Vagina (tissue), 2 donors: ENCODE measurements at regions of chr16 and their contacts with region 1.

Region 1: GRCh38 chr16:81752225-81752875 is 26.7 kb upstream of the PLCG2 start:
- DNase-seq: no peak
- H3K4me3 ChIP-seq: no peak overlapping the region
- H3K27ac ChIP-seq: no peak overlapping the region
- H3K4me1 ChIP-seq: no peaks in the 10 kb centered on the region
- H3K27me3 ChIP-seq: no peaks in the 10 kb centered on the region
- CTCF ChIP-seq: no peak
- POLR2A ChIP-seq: no peak

Region 2: DNA sequence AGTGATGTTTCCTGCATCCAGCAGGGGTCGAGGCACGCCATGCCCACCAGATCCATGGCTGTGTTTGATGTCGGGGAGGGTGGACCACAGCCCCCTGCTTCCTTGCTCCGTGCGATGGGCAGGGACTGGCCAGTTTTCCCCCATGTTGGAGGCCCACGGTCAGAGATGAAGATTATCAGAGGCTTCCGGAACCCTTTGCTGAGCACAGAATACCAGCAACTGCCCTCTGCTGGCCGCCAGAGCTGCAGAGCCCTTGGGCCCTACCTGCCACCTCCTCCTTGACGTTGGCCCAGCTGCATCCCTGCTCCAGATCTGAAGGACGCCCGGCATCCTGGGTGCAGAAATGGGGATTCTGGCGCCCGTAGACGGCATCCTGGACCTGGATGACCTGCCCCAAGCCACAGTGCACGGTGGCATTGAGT is 537.6 kb before region 1 on chr16:
- intact Hi-C with region 1: loop called (anchors 10 kb)
- DNase-seq: no peak
- H3K4me3 ChIP-seq: no peak overlapping the region
- H3K27ac ChIP-seq: no peak overlapping the region
- H3K4me1 ChIP-seq: no peaks in the 10 kb centered on the region
- H3K27me3 ChIP-seq: no peaks in the 10 kb centered on the region
- CTCF ChIP-seq: no peak
- POLR2A ChIP-seq: no peak